ENCODE measurements at regions of chr11 and their contacts with region 1.

Region 1: DNA sequence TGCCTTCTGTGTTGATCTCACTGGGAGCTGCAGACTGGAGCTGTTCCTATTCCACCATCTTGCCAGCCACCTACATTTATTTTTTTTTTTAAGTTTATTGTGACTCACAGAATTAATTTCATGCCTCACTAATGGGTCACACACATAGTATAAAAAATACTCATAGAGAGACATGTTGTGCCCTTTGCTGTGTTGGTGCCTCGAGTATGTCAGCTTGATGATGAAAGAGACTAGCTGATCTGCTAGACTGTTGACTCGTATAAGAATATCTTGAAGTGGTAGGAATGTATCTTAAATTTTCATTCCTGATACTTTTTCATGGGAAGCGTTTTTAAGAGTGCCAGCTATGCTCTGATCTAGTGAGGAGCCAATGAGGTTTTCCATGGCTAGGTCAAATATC is 28.6 kb upstream of the AMPD3 start:
- DNase-seq: no peak
- ATAC-seq: no peak
- H3K4me3 ChIP-seq: no peak overlapping the region
- H3K27ac ChIP-seq: no peak overlapping the region
- H3K4me1 ChIP-seq: no peaks in the 10 kb centered on the region
- H3K27me3 ChIP-seq: peaks cover 0 to 2% (median 0%) of the 10 kb centered on the region in 3 donors
- CTCF ChIP-seq: no peak

Region 2: GRCh38 chr11:10441652-10442503 is 15.4 kb after region 1 on chr11:
- intact Hi-C with region 1: no loop called
- DNase-seq: no peak
- ATAC-seq: peak; percentile 53 to 91 (median 78)
- H3K4me3 ChIP-seq: no peak overlapping the region
- H3K27ac ChIP-seq: peak overlapping the region; percentile 76
- H3K4me1 ChIP-seq: peaks cover 5% of the 10 kb centered on the region
- H3K27me3 ChIP-seq: no peaks in the 10 kb centered on the region
- CTCF ChIP-seq: no peak

Region 3: GRCh38 chr11:10522921-10523320 is 96.4 kb after region 1 on chr11:
- intact Hi-C with region 1: no loop called
- DNase-seq: no peak
- ATAC-seq: peak in 3 of 4 donors; percentile 19 to 30 (median 30)
- H3K4me3 ChIP-seq: no peak overlapping the region
- H3K27ac ChIP-seq: no peak overlapping the region
- H3K4me1 ChIP-seq: peaks cover 7% of the 10 kb centered on the region
- H3K27me3 ChIP-seq: no peaks in the 10 kb centered on the region
- CTCF ChIP-seq: no peak

Region 4: GRCh38 chr11:10669258-10670033 is 243.0 kb after region 1 on chr11:
- intact Hi-C with region 1: loop called in 1 of 2 experiments (anchors 1 kb)
- DNase-seq: peak in 1 of 2 donors; percentile 38
- ATAC-seq: peak; percentile 58 to 71 (median 66)
- H3K4me3 ChIP-seq: no peak overlapping the region
- H3K27ac ChIP-seq: peak overlapping the region; percentile 52
- H3K4me1 ChIP-seq: peaks cover 29% of the 10 kb centered on the region
- H3K27me3 ChIP-seq: no peaks in the 10 kb centered on the region
- CTCF ChIP-seq: no peak

Measured in psoas muscle (tissue), 8 donors.